RWPE1 (cell line): ENCODE measurements at regions of chr6 and their contacts with region 1.

Region 1: DNA sequence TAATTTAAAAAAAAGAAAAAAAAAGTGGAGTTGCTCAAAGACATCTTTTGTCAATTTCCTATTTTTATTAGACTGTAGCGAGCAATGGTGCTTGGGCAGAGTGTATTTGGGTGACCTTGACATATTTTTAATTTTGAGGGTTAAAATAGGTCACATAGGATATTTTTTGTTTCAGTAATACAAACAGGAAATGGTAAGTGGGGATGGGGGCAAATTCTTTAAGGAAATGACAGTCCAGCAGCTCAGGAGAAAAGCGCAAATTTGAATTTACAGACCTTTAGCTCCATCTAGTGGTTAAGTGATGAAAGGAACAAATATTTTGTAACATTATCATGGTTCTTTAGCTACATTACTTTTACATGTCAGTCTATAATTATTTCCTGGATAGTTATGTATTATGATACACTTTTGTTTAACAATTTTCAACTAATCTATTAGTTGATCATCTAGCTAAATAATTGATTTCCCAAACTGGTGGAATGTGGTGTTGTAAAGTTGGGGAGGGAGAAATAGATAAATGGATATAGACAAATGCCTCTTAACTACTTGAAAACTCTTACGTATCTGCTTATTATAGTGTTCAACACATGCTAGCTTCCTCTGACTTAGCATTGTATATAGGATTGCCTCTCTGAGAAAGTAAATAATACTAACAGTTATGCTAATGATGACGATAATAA is 10.0 kb downstream of the CITED2 start:
- DNase-seq: peak; percentile 50
- H3K27ac ChIP-seq: no peak overlapping the region
- CTCF ChIP-seq: peak; percentile 51

Region 2: DNA sequence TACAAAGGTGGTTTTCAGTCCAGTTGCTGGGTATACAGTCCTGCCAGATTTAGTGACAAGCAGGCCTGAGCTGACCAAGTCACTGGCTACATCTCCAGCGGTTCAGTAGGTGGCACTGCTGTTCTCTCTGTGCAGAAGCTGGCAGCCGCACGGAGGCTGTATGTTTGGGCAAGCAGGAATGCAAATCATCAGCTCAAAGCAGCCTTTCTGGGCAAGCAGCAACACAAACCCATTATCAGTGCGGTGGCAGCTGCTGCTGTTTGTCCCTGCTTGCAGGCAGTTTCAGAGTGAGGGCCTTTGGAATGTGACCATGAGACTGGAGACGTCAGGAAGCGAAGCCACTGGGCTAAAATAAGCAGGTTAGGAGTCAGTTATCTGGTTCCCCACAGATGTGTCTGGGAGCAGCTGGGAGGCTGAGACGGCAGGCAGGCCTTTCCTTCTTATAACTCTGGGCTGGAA is 145.1 kb before region 1 on chr6:
- CTCF ChIA-PET with region 1: interaction called, 18 read pairs
- POLR2A ChIA-PET with region 1: no interaction called
- DNase-seq: peak; percentile 69
- H3K27ac ChIP-seq: peak overlapping the region; percentile 50
- CTCF ChIP-seq: peak; percentile 68